ENCODE measurements at regions of chr1 and their contacts with region 1.

Region 1: GRCh38 chr1:27830621-27831424 is at the start of gene PPP1R8:
- DNase-seq: peak; percentile 92
- ATAC-seq: peak; percentile 98
- H3K4me3 Mint-ChIP-seq: peak within 1 kb of the TSS; percentile 95
- H3K27ac Mint-ChIP-seq: peak within 1 kb of the TSS; percentile 87
- H3K4me1 Mint-ChIP-seq: peaks cover 41% of the 10 kb centered on the region
- H3K27me3 Mint-ChIP-seq: no peaks in the 10 kb centered on the region
- total RNA-seq, gene PPP1R8: 61.4 to 66.6 TPM

Region 2: GRCh38 chr1:27725374-27726173 is 105.2 kb before region 1 on chr1 and contains the start of gene FAM76A:
- CTCF ChIA-PET with region 1: interaction called, 12 read pairs
- POLR2A ChIA-PET with region 1: interaction called, 8 read pairs
- DNase-seq: peak; percentile 100
- ATAC-seq: peak; percentile 94
- H3K4me3 Mint-ChIP-seq: peak within 1 kb of the TSS; percentile 86
- H3K27ac Mint-ChIP-seq: peak within 1 kb of the TSS; percentile 93
- H3K4me1 Mint-ChIP-seq: peaks cover 21% of the 10 kb centered on the region
- H3K27me3 Mint-ChIP-seq: no peaks in the 10 kb centered on the region
- total RNA-seq, gene FAM76A: 14.6 to 17.5 TPM

Region 3: DNA sequence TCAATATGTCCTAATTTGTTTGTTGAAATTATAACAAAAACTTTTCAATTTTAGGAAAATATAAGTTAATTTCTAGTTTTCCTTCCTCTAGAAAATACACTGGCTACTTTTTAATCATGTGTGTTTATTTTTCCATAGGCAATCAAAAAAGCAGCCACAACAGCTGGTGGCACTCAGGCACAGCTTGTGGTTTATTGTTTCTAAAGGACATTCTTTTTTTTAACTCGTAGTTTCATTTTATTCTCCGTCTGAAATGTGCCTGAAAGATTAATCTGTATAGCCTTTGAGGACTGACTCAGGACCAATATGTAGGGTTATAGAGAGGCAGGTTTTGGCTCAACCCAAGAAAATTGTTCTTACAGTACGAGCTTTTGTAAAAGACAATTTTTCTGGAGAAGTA is 78.5 kb before region 1 on chr1:
- CTCF ChIA-PET with region 1: no interaction called
- POLR2A ChIA-PET with region 1: no interaction called
- DNase-seq: no peak
- ATAC-seq: no peak
- H3K4me3 Mint-ChIP-seq: no peak overlapping the region
- H3K27ac Mint-ChIP-seq: no peak overlapping the region
- H3K4me1 Mint-ChIP-seq: peaks cover 9% of the 10 kb centered on the region
- H3K27me3 Mint-ChIP-seq: no peaks in the 10 kb centered on the region

Region 4: DNA sequence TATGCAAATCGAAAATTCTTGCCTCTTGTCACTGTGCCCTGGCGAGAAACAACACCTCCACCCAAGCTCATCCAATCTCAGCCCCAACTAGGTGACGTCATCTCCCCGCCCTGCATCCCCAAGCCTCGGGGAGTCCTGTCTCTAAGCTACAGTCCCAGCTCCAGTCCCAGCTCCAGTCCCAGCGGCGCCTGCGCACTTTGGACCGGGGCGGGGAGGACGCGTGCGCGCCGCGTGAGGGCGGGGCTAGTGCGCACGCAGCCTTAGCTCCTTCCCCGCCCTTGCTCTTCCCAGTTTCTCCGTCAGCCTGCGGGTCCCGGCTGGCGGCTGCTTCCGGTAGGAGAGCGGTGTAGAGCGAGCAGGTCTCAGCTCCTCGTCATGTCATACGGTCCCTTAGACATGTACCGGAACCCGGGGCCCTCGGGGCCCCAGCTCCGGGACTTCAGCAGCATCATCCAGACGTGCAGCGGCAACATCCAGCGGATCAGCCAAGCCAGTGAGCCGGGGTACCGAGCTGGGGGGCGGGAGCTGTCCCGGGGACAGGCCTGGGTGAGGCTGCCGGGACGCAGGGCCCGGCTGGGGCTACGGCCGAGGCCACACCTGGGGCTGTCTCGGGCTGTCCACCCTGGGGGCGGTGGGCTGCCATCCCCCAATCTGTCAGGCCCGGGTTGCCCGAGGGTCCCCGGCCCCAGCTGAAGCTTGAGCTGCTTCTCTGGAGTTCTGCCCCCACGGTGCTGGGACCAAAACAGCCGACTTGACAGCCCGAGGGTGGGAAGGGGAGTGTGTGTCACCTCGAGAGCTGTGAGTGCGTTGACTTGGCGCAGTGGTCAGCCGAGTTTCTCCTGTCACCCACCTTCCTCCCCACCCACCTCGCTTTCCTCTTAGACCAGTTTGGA is 57.6 kb before region 1 on chr1 and contains the start of gene STX12:
- CTCF ChIA-PET with region 1: interaction called, 3 read pairs
- POLR2A ChIA-PET with region 1: interaction called, 11 read pairs
- DNase-seq: peak; percentile 100
- ATAC-seq: peak; percentile 99
- H3K4me3 Mint-ChIP-seq: peak within 1 kb of the TSS; percentile 96
- H3K27ac Mint-ChIP-seq: peak within 1 kb of the TSS; percentile 97
- H3K4me1 Mint-ChIP-seq: peaks cover 30% of the 10 kb centered on the region
- H3K27me3 Mint-ChIP-seq: no peaks in the 10 kb centered on the region
- total RNA-seq, gene STX12: 21.8 to 23.9 TPM

Region 5: GRCh38 chr1:27789540-27790041 is 41.2 kb before region 1 on chr1:
- CTCF ChIA-PET with region 1: no interaction called
- POLR2A ChIA-PET with region 1: no interaction called
- DNase-seq: no peak
- ATAC-seq: no peak
- H3K4me3 Mint-ChIP-seq: no peak overlapping the region
- H3K27ac Mint-ChIP-seq: no peak overlapping the region
- H3K4me1 Mint-ChIP-seq: peaks cover 4% of the 10 kb centered on the region
- H3K27me3 Mint-ChIP-seq: no peaks in the 10 kb centered on the region

Region 6: GRCh38 chr1:27970401-27970800 is 139.6 kb after region 1 on chr1:
- CTCF ChIA-PET with region 1: no interaction called
- POLR2A ChIA-PET with region 1: no interaction called
- DNase-seq: no peak
- ATAC-seq: no peak
- H3K4me3 Mint-ChIP-seq: no peak overlapping the region
- H3K27ac Mint-ChIP-seq: no peak overlapping the region
- H3K4me1 Mint-ChIP-seq: peaks cover 12% of the 10 kb centered on the region
- H3K27me3 Mint-ChIP-seq: no peaks in the 10 kb centered on the region

Region 7: DNA sequence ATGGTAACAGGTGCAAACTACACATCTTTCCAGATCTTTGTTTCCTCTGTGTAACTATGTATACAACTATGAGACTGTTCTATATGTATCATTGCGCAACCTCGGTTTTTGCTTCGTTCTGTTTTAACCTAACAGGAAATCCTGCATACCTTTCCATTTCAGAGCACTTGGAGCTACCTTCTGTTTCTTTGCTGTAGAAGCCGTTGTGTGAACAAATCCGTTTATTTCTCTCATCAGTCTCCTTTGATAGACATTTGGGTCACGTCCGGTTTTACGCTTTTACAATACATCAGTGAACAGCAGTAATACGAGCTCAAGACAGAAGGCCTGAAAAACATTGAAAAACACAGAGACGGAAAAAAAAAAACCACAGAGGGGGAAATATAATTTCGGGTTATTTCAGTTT is 415.6 kb after region 1 on chr1:
- CTCF ChIA-PET with region 1: no interaction called
- POLR2A ChIA-PET with region 1: no interaction called
- DNase-seq: peak; percentile 81
- ATAC-seq: peak; percentile 39
- H3K4me3 Mint-ChIP-seq: peak overlapping the region; percentile 80
- H3K27ac Mint-ChIP-seq: peak overlapping the region; percentile 94
- H3K4me1 Mint-ChIP-seq: peaks cover 66% of the 10 kb centered on the region
- H3K27me3 Mint-ChIP-seq: no peaks in the 10 kb centered on the region

Measured in activated CD8-positive, alpha-beta T cell treated with anti-CD3 and anti-CD28 coated beads, Interleukin-2, amount 10 ng/mL, durations not matched to agents 7 days and 5 days (primary cell).